Tibial artery (tissue), 4 donors: ENCODE measurements at regions of chr3 and their contacts with region 1.

Region 1: GRCh38 chr3:134794950-134795745 is at the start of gene EPHB1:
- DNase-seq: peak; percentile 71 to 89
- H3K4me3 ChIP-seq: peak within 1 kb of the TSS; percentile 53 to 64
- H3K27ac ChIP-seq: peak within 1 kb of the TSS; percentile 34 to 68
- H3K4me1 ChIP-seq: peaks cover 0 to 47% (median 39%) of the 10 kb centered on the region in 4 donors
- H3K27me3 ChIP-seq: no peaks in the 10 kb centered on the region
- CTCF ChIP-seq: peak; percentile 86 to 94

Region 2: GRCh38 chr3:135503760-135504686 is 708.9 kb after region 1 on chr3:
- intact Hi-C with region 1: loop called (anchors 5 kb)
- DNase-seq: peak; percentile 24 to 68
- H3K4me3 ChIP-seq: no peak overlapping the region
- H3K27ac ChIP-seq: no peak overlapping the region
- H3K4me1 ChIP-seq: no peaks in the 10 kb centered on the region
- H3K27me3 ChIP-seq: peaks cover 0 to 3% of the 10 kb centered on the region in 2 donors
- CTCF ChIP-seq: peak; percentile 27 to 40